ENCODE measurements at regions of chr4 and their contacts with region 1.

Region 1: GRCh38 chr4:186587416-186588018 is 32.1 kb upstream of the MTNR1A start:
- DNase-seq: peak; percentile 13 to 51 (median 37)
- ATAC-seq: peak; percentile 55
- H3K4me3 ChIP-seq: no peak overlapping the region
- H3K4me3 Mint-ChIP-seq: no peak overlapping the region
- H3K27ac ChIP-seq: no peak overlapping the region
- H3K27ac Mint-ChIP-seq: no peak overlapping the region
- H3K4me1 ChIP-seq: no peaks in the 10 kb centered on the region
- H3K4me1 Mint-ChIP-seq: no peaks in the 10 kb centered on the region
- H3K27me3 ChIP-seq: no peaks in the 10 kb centered on the region
- H3K27me3 Mint-ChIP-seq: peaks cover 0 to 9% (median 3%) of the 10 kb centered on the region in 5 donors

Region 2: GRCh38 chr4:185640811-185641675 is 946.5 kb before region 1 on chr4:
- CTCF ChIA-PET with region 1: no interaction called
- POLR2A ChIA-PET with region 1: no interaction called
- intact Hi-C with region 1: loop called in 1 of 2 experiments (anchors 1 kb)
- DNase-seq: peak in 4 of 9 donors; percentile 2 to 15 (median 5)
- ATAC-seq: no peak
- H3K4me3 ChIP-seq: no peak overlapping the region
- H3K4me3 Mint-ChIP-seq: no peak overlapping the region
- H3K27ac ChIP-seq: no peak overlapping the region
- H3K27ac Mint-ChIP-seq: no peak overlapping the region
- H3K4me1 ChIP-seq: no peaks in the 10 kb centered on the region
- H3K4me1 Mint-ChIP-seq: peaks cover 0 to 5% (median 4%) of the 10 kb centered on the region in 7 donors
- H3K27me3 ChIP-seq: no peaks in the 10 kb centered on the region
- H3K27me3 Mint-ChIP-seq: peaks cover 33 to 50% (median 44%) of the 10 kb centered on the region in 5 donors

Region 3: DNA sequence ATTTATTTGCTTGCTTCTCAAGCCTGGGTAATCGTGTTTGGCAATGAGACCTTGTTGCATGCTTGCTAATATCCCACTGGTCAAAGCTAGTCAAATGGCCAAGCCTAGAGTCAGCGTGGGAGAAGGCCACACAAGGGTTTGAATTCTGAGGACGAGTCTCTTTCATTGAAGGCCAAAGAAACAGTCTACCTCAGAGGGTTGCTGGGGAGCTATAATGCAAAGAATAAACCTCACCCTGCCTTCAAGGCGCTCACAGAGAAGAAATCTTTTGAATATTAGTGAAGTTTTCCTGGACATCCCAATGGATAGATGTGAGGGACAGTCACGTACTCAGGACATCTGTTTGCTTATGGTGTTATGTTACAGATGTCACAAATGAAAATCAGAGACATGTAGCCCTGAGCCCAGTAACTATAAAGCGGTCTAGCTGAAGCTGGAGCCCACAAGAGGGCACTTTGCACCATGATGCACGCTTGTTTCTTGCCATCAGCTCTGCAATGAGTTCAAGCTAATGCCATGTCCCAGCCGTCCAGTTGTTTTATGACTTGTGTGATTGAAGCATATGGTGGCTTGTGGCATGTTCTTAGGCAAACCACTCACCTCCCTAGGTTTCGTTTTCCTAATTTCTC is 519.6 kb before region 1 on chr4:
- CTCF ChIA-PET with region 1: interaction called, 17 read pairs
- POLR2A ChIA-PET with region 1: no interaction called
- intact Hi-C with region 1: no loop called
- DNase-seq: peak in 5 of 9 donors; percentile 14 to 41 (median 16)
- ATAC-seq: peak; percentile 77
- H3K4me3 ChIP-seq: peak overlapping the region; percentile 63
- H3K4me3 Mint-ChIP-seq: peak overlapping the region; percentile 31 to 88 (median 79)
- H3K27ac ChIP-seq: no peak overlapping the region
- H3K27ac Mint-ChIP-seq: peak overlapping the region in 2 of 9 donors; percentile 49 to 80
- H3K4me1 ChIP-seq: peaks cover 0 to 3% of the 10 kb centered on the region in 2 donors
- H3K4me1 Mint-ChIP-seq: peaks cover 0 to 28% (median 25%) of the 10 kb centered on the region in 7 donors
- H3K27me3 ChIP-seq: no peaks in the 10 kb centered on the region
- H3K27me3 Mint-ChIP-seq: peaks cover 0 to 18% (median 14%) of the 10 kb centered on the region in 5 donors

Region 4: GRCh38 chr4:186149872-186150271 is 437.6 kb before region 1 on chr4:
- CTCF ChIA-PET with region 1: no interaction called
- POLR2A ChIA-PET with region 1: no interaction called
- intact Hi-C with region 1: loop called in 1 of 2 experiments (anchors 2 kb)
- DNase-seq: peak in 3 of 9 donors; percentile 17 to 38 (median 29)
- ATAC-seq: no peak
- H3K4me3 ChIP-seq: no peak overlapping the region
- H3K4me3 Mint-ChIP-seq: no peak overlapping the region
- H3K27ac ChIP-seq: no peak overlapping the region
- H3K27ac Mint-ChIP-seq: peak overlapping the region in 1 of 9 donors; percentile 22
- H3K4me1 ChIP-seq: no peaks in the 10 kb centered on the region
- H3K4me1 Mint-ChIP-seq: peaks cover 0 to 10% (median 6%) of the 10 kb centered on the region in 7 donors
- H3K27me3 ChIP-seq: peaks cover 0 to 11% of the 10 kb centered on the region in 2 donors
- H3K27me3 Mint-ChIP-seq: peaks cover 42 to 56% (median 46%) of the 10 kb centered on the region in 5 donors

Region 5: GRCh38 chr4:186205156-186205555 is 382.4 kb before region 1 on chr4:
- CTCF ChIA-PET with region 1: no interaction called
- POLR2A ChIA-PET with region 1: no interaction called
- intact Hi-C with region 1: no loop called
- DNase-seq: no peak
- ATAC-seq: no peak
- H3K4me3 ChIP-seq: peak overlapping the region; percentile 12
- H3K4me3 Mint-ChIP-seq: peak overlapping the region in 2 of 10 donors; percentile 38 to 83
- H3K27ac ChIP-seq: peak overlapping the region; percentile 73
- H3K27ac Mint-ChIP-seq: peak overlapping the region in 2 of 9 donors; percentile 94 to 97
- H3K4me1 ChIP-seq: no peaks in the 10 kb centered on the region
- H3K4me1 Mint-ChIP-seq: peaks cover 3 to 43% (median 14%) of the 10 kb centered on the region in 7 donors
- H3K27me3 ChIP-seq: no peaks in the 10 kb centered on the region
- H3K27me3 Mint-ChIP-seq: no peaks in the 10 kb centered on the region

Region 6: DNA sequence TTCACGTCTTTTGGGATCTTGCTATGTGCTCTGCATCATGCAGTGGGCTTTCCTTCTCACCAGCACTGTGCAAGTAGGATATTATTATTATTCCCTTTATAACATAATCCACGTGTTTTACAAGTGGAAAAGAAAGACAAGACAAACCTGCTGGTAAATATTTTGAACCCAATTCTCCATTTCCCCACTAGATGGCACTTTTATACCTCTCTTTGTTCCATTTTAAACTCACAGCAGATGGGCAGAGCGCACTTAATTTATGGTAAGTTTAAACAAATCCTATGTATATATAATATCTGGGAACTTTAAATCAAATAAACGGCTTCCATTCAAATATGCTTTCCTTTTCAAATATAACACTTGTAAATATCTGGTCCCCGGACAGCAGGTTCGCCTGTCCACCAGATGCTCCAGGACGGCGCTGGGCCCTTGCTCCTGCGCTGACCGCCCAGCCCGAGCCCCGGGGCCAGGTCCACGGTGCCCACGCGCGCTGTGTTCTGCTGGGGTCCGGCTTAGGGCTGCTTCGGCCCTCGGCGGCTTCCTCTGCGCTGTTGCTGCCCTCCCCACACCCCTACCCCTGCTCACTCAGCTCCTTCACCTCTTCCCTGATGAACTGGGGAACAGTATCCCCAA is 290.4 kb before region 1 on chr4:
- CTCF ChIA-PET with region 1: interaction called, 8 read pairs
- POLR2A ChIA-PET with region 1: no interaction called
- intact Hi-C with region 1: loop called in 1 of 2 experiments (anchors 1 kb)
- DNase-seq: peak in 4 of 9 donors; percentile 5 to 23 (median 15)
- ATAC-seq: no peak
- H3K4me3 ChIP-seq: no peak overlapping the region
- H3K4me3 Mint-ChIP-seq: no peak overlapping the region
- H3K27ac ChIP-seq: no peak overlapping the region
- H3K27ac Mint-ChIP-seq: no peak overlapping the region
- H3K4me1 ChIP-seq: no peaks in the 10 kb centered on the region
- H3K4me1 Mint-ChIP-seq: peaks cover 0 to 5% (median 5%) of the 10 kb centered on the region in 7 donors
- H3K27me3 ChIP-seq: no peaks in the 10 kb centered on the region
- H3K27me3 Mint-ChIP-seq: peaks cover 23 to 62% (median 37%) of the 10 kb centered on the region in 5 donors

Region 7: GRCh38 chr4:186366326-186366725 is 221.2 kb before region 1 on chr4:
- CTCF ChIA-PET with region 1: no interaction called
- POLR2A ChIA-PET with region 1: no interaction called
- intact Hi-C with region 1: loop called in 1 of 2 experiments (anchors 2 kb)
- DNase-seq: no peak
- ATAC-seq: no peak
- H3K4me3 ChIP-seq: no peak overlapping the region
- H3K4me3 Mint-ChIP-seq: no peak overlapping the region
- H3K27ac ChIP-seq: no peak overlapping the region
- H3K27ac Mint-ChIP-seq: no peak overlapping the region
- H3K4me1 ChIP-seq: no peaks in the 10 kb centered on the region
- H3K4me1 Mint-ChIP-seq: no peaks in the 10 kb centered on the region
- H3K27me3 ChIP-seq: no peaks in the 10 kb centered on the region
- H3K27me3 Mint-ChIP-seq: no peaks in the 10 kb centered on the region